Dendritic cell treated with granulocyte-macrophage colony-stimulating factor and Interleukin-4, amounts not matched to agents 40 ng/mL and 50 ng/mL, for 4 days (primary cell): ENCODE measurements at regions of chr2 and their contacts with region 1.

Region 1: GRCh38 chr2:232327105-232328041 is 51.2 kb upstream of the ALPP start:
- H3K4me3 Mint-ChIP-seq: no peak overlapping the region
- H3K27ac Mint-ChIP-seq: no peak overlapping the region
- H3K4me1 Mint-ChIP-seq: peaks cover 11% of the 10 kb centered on the region
- H3K27me3 Mint-ChIP-seq: no peaks in the 10 kb centered on the region

Region 2: DNA sequence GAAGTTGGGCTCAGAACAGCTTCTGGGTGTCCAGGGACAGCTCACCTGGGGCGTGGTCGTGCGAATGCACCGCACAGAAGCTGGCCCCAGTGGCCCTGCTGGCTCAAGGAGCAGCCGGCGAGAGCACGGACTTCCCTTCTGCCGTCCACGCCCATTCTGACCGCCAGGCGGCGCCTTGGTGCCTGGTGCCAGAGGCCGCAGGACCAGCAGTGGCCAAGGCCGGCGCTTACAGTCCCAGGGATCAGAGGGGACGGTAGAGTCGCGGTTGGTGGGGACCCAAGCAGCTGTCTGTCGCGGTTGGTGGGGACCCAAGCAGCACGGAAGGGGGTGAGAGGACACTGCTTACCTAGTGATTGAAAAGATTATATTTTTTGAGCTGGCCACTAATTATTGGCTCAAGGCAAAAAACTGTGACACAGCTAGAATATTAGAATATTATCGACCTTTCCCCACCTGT is 426.9 kb before region 1 on chr2:
- intact Hi-C with region 1: loop called (anchors 5 kb)
- H3K4me3 Mint-ChIP-seq: no peak overlapping the region
- H3K27ac Mint-ChIP-seq: no peak overlapping the region
- H3K4me1 Mint-ChIP-seq: peaks cover 5% of the 10 kb centered on the region
- H3K27me3 Mint-ChIP-seq: peaks cover 9% of the 10 kb centered on the region

Region 3: GRCh38 chr2:231925303-231926179 is 401.8 kb before region 1 on chr2:
- intact Hi-C with region 1: loop called (anchors 1 kb)
- H3K4me3 Mint-ChIP-seq: peak overlapping the region; percentile 41
- H3K27ac Mint-ChIP-seq: no peak overlapping the region
- H3K4me1 Mint-ChIP-seq: peaks cover 11% of the 10 kb centered on the region
- H3K27me3 Mint-ChIP-seq: peaks cover 74% of the 10 kb centered on the region

Region 4: GRCh38 chr2:232292395-232293154 is 34.8 kb before region 1 on chr2:
- intact Hi-C with region 1: loop called (anchors 2 kb)
- H3K4me3 Mint-ChIP-seq: no peak overlapping the region
- H3K27ac Mint-ChIP-seq: no peak overlapping the region
- H3K4me1 Mint-ChIP-seq: peaks cover 21% of the 10 kb centered on the region
- H3K27me3 Mint-ChIP-seq: no peaks in the 10 kb centered on the region